MCF 10A (cell line): ENCODE measurements at regions of chr1 and their contacts with region 1.

Region 1: GRCh38 chr1:151594143-151594625 is 17.7 kb upstream of the SNX27 start:
- DNase-seq: peak; percentile 84
- H3K4me3 Mint-ChIP-seq: no peak overlapping the region
- H3K27ac Mint-ChIP-seq: no peak overlapping the region
- H3K4me1 Mint-ChIP-seq: peaks cover 21% of the 10 kb centered on the region
- H3K27me3 Mint-ChIP-seq: no peaks in the 10 kb centered on the region
- CTCF ChIP-seq: peak; percentile 99

Region 2: GRCh38 chr1:150268705-150269403 is 1325.3 kb before region 1 on chr1 and contains the start of gene APH1A:
- CTCF ChIA-PET with region 1: no interaction called
- POLR2A ChIA-PET with region 1: no interaction called
- intact Hi-C with region 1: no loop called
- DNase-seq: peak; percentile 99
- H3K4me3 Mint-ChIP-seq: peak within 1 kb of the TSS; percentile 81
- H3K27ac Mint-ChIP-seq: peak within 1 kb of the TSS; percentile 83
- H3K4me1 Mint-ChIP-seq: peaks cover 32% of the 10 kb centered on the region
- H3K27me3 Mint-ChIP-seq: no peaks in the 10 kb centered on the region
- CTCF ChIP-seq: no peak
- total RNA-seq, gene APH1A: 123 and 154 TPM in 2 replicates

Region 3: GRCh38 chr1:151534665-151535278 is 59.4 kb before region 1 on chr1:
- CTCF ChIA-PET with region 1: interaction called, 33 read pairs
- POLR2A ChIA-PET with region 1: interaction called, 5 read pairs
- intact Hi-C with region 1: loop called (anchors 1 kb)
- DNase-seq: peak; percentile 89
- H3K4me3 Mint-ChIP-seq: no peak overlapping the region
- H3K27ac Mint-ChIP-seq: no peak overlapping the region
- H3K4me1 Mint-ChIP-seq: peaks cover 28% of the 10 kb centered on the region
- H3K27me3 Mint-ChIP-seq: no peaks in the 10 kb centered on the region
- CTCF ChIP-seq: peak; percentile 95

Region 4: DNA sequence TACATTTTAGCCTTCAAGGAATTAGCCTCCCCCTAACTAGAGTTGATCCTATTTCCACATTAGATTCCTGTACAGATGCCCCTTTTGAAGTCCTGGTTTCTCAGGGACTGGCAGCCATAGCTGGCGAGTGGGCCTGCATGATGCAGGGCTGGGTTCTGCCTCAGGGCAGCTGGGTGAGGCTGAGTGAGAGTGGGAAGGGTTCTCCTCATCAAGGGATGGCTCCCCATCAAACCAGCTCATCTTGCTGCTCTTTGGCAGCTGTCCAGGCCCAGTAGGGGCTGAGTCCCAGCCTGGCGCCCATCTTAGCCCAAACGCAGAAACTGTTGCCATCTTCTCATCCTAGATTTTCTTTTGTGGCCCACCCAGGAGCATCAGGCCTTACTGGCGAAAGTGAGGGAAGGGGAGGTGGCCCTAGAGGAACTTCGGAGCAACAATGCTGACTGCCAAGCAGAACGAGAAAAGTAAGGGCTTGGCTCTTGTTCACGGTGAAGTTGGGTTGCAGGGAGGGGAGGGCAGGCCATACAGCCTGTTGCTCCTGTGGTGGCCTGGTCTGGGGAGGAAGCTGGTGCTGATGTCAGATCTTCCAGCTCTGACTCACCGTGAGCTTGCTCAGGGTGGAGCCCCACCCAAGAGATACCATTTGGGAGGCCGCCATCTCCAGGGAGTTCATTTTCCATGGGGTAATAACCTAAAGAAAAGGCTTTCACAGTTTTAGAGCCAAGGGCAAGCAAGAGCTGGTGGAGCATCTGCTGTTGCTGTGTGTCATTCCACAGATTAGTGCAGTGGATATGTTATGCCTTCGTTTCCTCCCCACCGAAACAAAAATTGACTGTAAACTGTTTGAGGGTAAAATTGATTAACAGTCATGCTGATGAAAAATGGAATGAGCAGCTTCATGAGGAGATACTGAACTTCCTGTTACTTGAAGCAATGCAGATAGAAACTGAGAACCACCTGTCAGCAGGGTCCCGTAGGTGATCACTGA is 19.3 kb before region 1 on chr1:
- CTCF ChIA-PET with region 1: interaction called, 56 read pairs
- POLR2A ChIA-PET with region 1: interaction called, 6 read pairs
- intact Hi-C with region 1: no loop called
- DNase-seq: peak; percentile 82
- H3K4me3 Mint-ChIP-seq: no peak overlapping the region
- H3K27ac Mint-ChIP-seq: peak overlapping the region; percentile 52
- H3K4me1 Mint-ChIP-seq: peaks cover 42% of the 10 kb centered on the region
- H3K27me3 Mint-ChIP-seq: no peaks in the 10 kb centered on the region
- CTCF ChIP-seq: no peak

Region 5: GRCh38 chr1:151629279-151629678 is 35.1 kb after region 1 on chr1:
- CTCF ChIA-PET with region 1: interaction called, 11 read pairs
- POLR2A ChIA-PET with region 1: no interaction called
- intact Hi-C with region 1: no loop called
- DNase-seq: no peak
- H3K4me3 Mint-ChIP-seq: no peak overlapping the region
- H3K27ac Mint-ChIP-seq: no peak overlapping the region
- H3K4me1 Mint-ChIP-seq: peaks cover 9% of the 10 kb centered on the region
- H3K27me3 Mint-ChIP-seq: no peaks in the 10 kb centered on the region
- CTCF ChIP-seq: no peak

Region 6: DNA sequence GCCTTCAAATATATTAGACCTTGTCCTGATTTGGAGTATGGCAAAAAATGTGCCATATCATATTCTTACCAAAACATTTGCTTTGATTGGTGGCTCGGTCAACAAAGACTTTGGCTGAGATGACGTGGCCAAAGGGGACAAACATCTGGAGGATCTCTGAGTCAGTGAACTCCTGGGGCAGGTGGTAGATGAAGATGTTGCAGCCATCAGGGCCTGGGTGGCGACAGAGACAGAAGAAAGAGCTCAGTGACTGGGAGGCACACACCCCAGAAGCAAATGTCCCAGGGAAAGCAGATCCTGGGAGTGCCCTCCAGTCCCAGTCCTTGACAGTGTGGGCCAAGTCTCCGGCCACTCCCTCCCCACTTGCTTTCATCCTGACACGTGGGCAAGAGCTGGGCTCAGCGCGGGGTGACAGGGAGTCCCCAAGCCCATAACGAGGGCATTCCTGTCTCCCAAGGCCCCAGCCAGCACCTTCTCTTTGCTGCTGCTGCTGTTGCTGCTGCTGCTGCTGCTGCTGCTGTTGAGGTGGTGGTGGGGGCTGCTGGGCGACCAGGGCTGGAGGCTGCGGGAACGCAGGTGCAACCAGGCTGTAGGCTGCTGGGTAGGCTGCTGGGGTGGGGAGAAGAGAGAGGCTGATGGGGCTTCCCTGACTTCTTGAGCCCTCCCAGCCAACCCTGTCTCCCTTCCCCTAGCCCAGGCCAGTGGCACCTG is 111.7 kb after region 1 on chr1:
- CTCF ChIA-PET with region 1: no interaction called
- POLR2A ChIA-PET with region 1: no interaction called
- intact Hi-C with region 1: no loop called
- DNase-seq: peak; percentile 27
- H3K4me3 Mint-ChIP-seq: no peak overlapping the region
- H3K27ac Mint-ChIP-seq: no peak overlapping the region
- H3K4me1 Mint-ChIP-seq: peaks cover 6% of the 10 kb centered on the region
- H3K27me3 Mint-ChIP-seq: no peaks in the 10 kb centered on the region
- CTCF ChIP-seq: no peak

Region 7: GRCh38 chr1:151728151-151729054 is 134.2 kb after region 1 on chr1:
- CTCF ChIA-PET with region 1: interaction called, 45 read pairs
- POLR2A ChIA-PET with region 1: interaction called, 3 read pairs
- intact Hi-C with region 1: no loop called
- DNase-seq: no peak
- H3K4me3 Mint-ChIP-seq: no peak overlapping the region
- H3K27ac Mint-ChIP-seq: no peak overlapping the region
- H3K4me1 Mint-ChIP-seq: no peaks in the 10 kb centered on the region
- H3K27me3 Mint-ChIP-seq: peaks cover 27% of the 10 kb centered on the region
- CTCF ChIP-seq: no peak

Region 8: GRCh38 chr1:151839457-151840405 is 245.5 kb after region 1 on chr1 and contains the start of gene C2CD4D:
- CTCF ChIA-PET with region 1: interaction called, 11 read pairs
- POLR2A ChIA-PET with region 1: no interaction called
- intact Hi-C with region 1: loop called (anchors 1 kb)
- DNase-seq: peak; percentile 84
- H3K4me3 Mint-ChIP-seq: peak within 1 kb of the TSS; percentile 85
- H3K27ac Mint-ChIP-seq: peak within 1 kb of the TSS; percentile 91
- H3K4me1 Mint-ChIP-seq: peaks cover 41% of the 10 kb centered on the region
- H3K27me3 Mint-ChIP-seq: no peaks in the 10 kb centered on the region
- CTCF ChIP-seq: no peak
- total RNA-seq, gene C2CD4D: not detected in 2 replicates